Activated B cell treated with CpG ODN at 0.5 μM for 24 hours (primary cell): ENCODE measurements at regions of chr6 and their contacts with region 1.

Region 1: GRCh38 chr6:139323511-139324300 is 31.9 kb upstream of the TXLNB start:
- DNase-seq: peak; percentile 56
- ATAC-seq: peak; percentile 62
- H3K4me3 Mint-ChIP-seq: peak overlapping the region; percentile 85
- H3K27ac Mint-ChIP-seq: peak overlapping the region; percentile 89
- H3K4me1 Mint-ChIP-seq: peaks cover 45% of the 10 kb centered on the region
- H3K27me3 Mint-ChIP-seq: no peaks in the 10 kb centered on the region
- CTCF ChIP-seq: no peak

Region 2: DNA sequence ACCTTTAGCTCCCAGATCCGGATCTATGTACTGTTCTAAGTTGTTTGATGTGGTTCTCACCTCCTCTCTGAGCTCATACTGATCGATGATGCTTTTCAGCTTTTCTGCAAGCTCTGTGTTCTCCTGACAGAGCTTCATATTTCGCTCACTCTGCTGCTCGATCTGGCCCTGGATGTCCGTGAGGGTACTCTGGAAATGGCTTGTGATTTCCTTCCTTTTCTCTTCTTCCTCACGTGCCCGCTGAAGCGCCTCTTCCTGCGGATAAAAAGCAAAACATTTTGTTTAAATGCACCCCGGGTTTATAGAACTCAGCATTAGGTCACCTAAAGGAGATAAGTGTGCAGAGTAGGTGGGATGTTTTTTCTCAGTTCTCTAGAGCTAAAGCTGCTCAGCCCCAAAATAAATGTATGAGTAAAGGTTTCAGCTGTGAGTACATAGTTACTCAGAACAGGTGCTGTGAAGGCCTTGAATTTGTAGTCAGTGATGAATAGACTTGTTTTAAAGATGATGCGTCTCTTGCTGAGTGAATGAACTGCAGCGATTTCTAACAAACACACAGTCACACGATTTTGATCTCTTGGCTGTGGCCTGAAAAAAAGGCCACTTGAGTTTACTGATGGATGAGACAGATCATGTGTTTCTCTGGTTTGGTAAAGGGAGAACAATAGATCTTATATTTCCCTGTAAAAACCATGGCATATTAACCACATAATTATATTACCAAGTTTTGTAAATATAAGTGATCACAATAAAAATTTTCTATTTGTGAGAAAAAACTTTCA is 61.0 kb before region 1 on chr6:
- CTCF ChIA-PET with region 1: no interaction called
- POLR2A ChIA-PET with region 1: interaction called, 11 read pairs
- intact Hi-C with region 1: no loop called
- DNase-seq: no peak
- ATAC-seq: peak; percentile 82
- H3K4me3 Mint-ChIP-seq: peak overlapping the region; percentile 52
- H3K27ac Mint-ChIP-seq: peak overlapping the region; percentile 65
- H3K4me1 Mint-ChIP-seq: peaks cover 40% of the 10 kb centered on the region
- H3K27me3 Mint-ChIP-seq: no peaks in the 10 kb centered on the region
- CTCF ChIP-seq: no peak

Region 3: GRCh38 chr6:139271056-139271455 is 52.6 kb before region 1 on chr6:
- CTCF ChIA-PET with region 1: no interaction called
- POLR2A ChIA-PET with region 1: interaction called, 8 read pairs
- intact Hi-C with region 1: loop called (anchors 1 kb)
- DNase-seq: no peak
- ATAC-seq: peak; percentile 94
- H3K4me3 Mint-ChIP-seq: peak overlapping the region; percentile 75
- H3K27ac Mint-ChIP-seq: peak overlapping the region; percentile 96
- H3K4me1 Mint-ChIP-seq: peaks cover 80% of the 10 kb centered on the region
- H3K27me3 Mint-ChIP-seq: no peaks in the 10 kb centered on the region
- CTCF ChIP-seq: no peak

Region 4: DNA sequence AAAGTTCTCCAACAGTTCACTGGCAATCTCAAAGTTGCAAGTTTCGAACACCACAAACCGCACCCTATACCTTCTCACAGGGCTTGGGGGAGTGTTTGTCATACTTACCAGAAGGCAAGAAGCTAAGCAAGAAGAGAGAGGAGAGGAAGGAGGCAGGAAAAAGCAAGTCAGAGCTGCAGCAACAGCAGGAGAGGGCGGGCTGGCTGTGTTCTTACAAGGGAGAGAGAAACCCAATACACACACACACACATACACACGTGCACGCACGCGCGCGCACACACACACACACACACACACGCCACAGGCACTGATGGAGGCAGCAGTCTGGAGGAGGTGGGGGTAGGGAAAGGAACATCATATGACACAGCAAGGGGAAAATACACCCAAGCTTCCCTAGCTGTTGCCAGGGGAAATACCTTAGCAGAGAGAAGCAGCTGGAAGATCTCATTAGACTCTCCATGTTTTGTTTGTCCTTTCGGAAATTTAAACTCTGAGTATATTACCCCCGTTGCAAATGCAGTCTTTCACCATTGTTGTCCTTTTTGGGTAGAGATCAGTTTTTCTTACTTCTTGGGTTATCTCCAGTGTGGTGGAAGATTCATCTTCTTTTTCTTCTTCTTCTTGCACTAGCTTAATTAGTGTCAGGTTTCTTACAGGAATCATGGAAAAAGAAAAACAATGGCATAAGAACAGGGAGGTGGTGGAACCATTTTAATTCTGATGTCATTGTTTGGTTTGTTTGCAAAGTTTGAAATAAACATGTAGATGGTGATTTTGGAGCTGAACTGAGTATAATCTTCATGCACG is 31.7 kb before region 1 on chr6 and contains the start of gene TXLNB:
- CTCF ChIA-PET with region 1: no interaction called
- POLR2A ChIA-PET with region 1: interaction called, 25 read pairs
- intact Hi-C with region 1: loop called (anchors 1 kb)
- DNase-seq: no peak
- ATAC-seq: peak; percentile 59
- H3K4me3 Mint-ChIP-seq: peak within 1 kb of the TSS; percentile 76
- H3K27ac Mint-ChIP-seq: peak within 1 kb of the TSS; percentile 96
- H3K4me1 Mint-ChIP-seq: peaks cover 76% of the 10 kb centered on the region
- H3K27me3 Mint-ChIP-seq: no peaks in the 10 kb centered on the region
- CTCF ChIP-seq: no peak
- total RNA-seq, gene TXLNB: 1.9 and 2.4 TPM in 2 replicates

Region 5: DNA sequence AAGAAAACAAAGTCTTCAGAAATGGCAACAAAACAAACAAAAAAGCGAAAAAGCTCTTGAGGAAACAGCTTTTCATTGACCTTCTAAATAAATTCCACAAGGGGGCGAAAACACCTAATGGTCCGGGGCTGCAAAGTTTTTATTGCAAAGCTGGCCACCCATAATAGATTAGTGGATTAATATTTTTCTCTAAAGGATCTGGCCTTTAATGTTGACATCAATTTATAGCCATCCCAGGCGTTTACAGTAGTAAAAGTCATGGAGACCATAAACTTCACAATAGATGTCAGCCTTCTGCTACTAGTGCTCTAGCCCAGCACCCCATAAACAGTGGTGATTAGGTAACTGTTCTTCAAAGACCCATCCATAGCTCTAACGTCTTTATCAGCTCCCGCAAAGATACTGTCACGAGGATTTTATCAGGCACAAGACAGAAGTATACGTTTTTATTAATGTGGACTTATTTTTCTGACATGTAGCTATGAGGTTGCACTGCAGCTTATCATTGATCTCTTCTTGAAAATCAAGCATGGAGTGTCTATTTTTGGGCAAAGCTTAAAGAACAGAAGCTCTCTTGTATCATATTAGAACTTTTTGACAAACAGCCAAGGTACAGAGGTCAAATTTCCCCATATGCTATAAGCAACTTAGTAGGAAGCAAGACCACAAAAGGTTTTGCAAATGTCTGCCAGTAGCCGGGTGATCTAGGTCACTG is 46.0 kb after region 1 on chr6:
- CTCF ChIA-PET with region 1: interaction called, 15 read pairs
- POLR2A ChIA-PET with region 1: interaction called, 11 read pairs
- intact Hi-C with region 1: loop called (anchors 1 kb)
- DNase-seq: no peak
- ATAC-seq: no peak
- H3K4me3 Mint-ChIP-seq: no peak overlapping the region
- H3K27ac Mint-ChIP-seq: peak overlapping the region; percentile 4
- H3K4me1 Mint-ChIP-seq: peaks cover 27% of the 10 kb centered on the region
- H3K27me3 Mint-ChIP-seq: no peaks in the 10 kb centered on the region
- CTCF ChIP-seq: no peak